ENCODE measurements at regions of chr13 and their contacts with region 1.

Region 1: GRCh38 chr13:110400786-110401533 is 93.9 kb downstream of the COL4A2 start:
- DNase-seq: no peak
- H3K4me3 ChIP-seq: no peak overlapping the region
- H3K27ac ChIP-seq: no peak overlapping the region
- H3K27me3 ChIP-seq: no peaks in the 10 kb centered on the region
- CTCF ChIP-seq: no peak

Region 2: GRCh38 chr13:110412132-110412914 is 11.4 kb after region 1 on chr13:
- CTCF ChIA-PET with region 1: interaction called, 13 read pairs
- POLR2A ChIA-PET with region 1: interaction called, 5 read pairs
- DNase-seq: peak; percentile 98
- H3K4me3 ChIP-seq: no peak overlapping the region
- H3K27ac ChIP-seq: peak overlapping the region; percentile 61
- H3K27me3 ChIP-seq: no peaks in the 10 kb centered on the region
- CTCF ChIP-seq: peak; percentile 97

Region 3: GRCh38 chr13:111491021-111491420 is 1090.1 kb after region 1 on chr13:
- CTCF ChIA-PET with region 1: no interaction called
- POLR2A ChIA-PET with region 1: no interaction called
- DNase-seq: no peak
- H3K4me3 ChIP-seq: no peak overlapping the region
- H3K27ac ChIP-seq: no peak overlapping the region
- H3K27me3 ChIP-seq: no peaks in the 10 kb centered on the region
- CTCF ChIP-seq: no peak

Measured in AG04450 (cell line).